ENCODE measurements at regions of chr6 and their contacts with region 1.

Region 1: DNA sequence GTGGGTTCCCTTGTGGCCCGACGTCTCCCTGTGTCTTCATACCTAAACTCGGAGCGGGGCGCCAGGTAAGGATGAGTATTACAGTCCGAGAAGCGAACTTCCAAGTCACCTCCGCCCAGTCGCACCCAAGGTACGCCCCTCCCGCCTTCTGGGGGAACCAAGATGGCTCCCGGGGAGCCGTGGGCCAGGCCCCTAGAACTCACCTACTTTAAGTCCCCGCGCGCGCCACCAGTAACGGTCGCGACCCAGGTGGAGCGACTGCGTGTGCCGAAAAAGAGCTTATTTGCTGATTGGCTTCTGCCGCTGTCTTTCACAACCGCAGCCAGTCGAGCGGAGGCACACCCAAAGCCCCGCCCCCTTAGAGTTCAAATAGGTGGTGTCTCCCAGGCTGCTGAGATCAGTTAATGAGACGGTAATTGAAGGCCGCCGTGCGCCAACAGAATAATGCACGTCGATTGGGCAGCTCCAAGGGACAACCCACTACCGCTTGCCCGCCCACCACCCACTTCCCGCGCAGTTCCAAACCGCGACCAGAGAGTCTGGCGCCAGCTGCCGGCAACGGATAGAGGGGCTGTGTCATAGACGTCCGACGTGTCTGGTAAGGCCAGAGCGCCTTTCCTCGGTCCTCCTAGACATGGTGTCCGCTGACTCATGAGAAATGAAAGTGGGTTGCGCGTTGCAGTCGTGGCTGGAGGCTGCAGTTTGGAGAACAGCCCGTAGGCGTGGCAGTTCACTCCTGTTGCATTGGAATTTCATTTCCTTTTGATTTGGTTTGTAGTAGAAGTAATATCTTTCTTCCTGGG is at the start of gene MDC1:
- DNase-seq: peak; percentile 100
- ATAC-seq: peak; percentile 79 to 88 (median 81)
- H3K4me3 ChIP-seq: peak within 1 kb of the TSS; percentile 66
- H3K27ac ChIP-seq: peak within 1 kb of the TSS; percentile 98
- H3K4me1 ChIP-seq: peaks cover 26% of the 10 kb centered on the region
- H3K27me3 ChIP-seq: no peaks in the 10 kb centered on the region
- CTCF ChIP-seq: peak; percentile 41
- total RNA-seq, gene MDC1: 12.7 to 18.0 (median 15.4) TPM

Region 2: GRCh38 chr6:30364591-30364990 is 352.7 kb before region 1 on chr6:
- intact Hi-C with region 1: no loop called
- DNase-seq: no peak
- ATAC-seq: no peak
- H3K4me3 ChIP-seq: no peak overlapping the region
- H3K27ac ChIP-seq: no peak overlapping the region
- H3K4me1 ChIP-seq: no peaks in the 10 kb centered on the region
- H3K27me3 ChIP-seq: peaks cover 0 to 43% (median 11%) of the 10 kb centered on the region in 3 donors
- CTCF ChIP-seq: no peak

Region 3: DNA sequence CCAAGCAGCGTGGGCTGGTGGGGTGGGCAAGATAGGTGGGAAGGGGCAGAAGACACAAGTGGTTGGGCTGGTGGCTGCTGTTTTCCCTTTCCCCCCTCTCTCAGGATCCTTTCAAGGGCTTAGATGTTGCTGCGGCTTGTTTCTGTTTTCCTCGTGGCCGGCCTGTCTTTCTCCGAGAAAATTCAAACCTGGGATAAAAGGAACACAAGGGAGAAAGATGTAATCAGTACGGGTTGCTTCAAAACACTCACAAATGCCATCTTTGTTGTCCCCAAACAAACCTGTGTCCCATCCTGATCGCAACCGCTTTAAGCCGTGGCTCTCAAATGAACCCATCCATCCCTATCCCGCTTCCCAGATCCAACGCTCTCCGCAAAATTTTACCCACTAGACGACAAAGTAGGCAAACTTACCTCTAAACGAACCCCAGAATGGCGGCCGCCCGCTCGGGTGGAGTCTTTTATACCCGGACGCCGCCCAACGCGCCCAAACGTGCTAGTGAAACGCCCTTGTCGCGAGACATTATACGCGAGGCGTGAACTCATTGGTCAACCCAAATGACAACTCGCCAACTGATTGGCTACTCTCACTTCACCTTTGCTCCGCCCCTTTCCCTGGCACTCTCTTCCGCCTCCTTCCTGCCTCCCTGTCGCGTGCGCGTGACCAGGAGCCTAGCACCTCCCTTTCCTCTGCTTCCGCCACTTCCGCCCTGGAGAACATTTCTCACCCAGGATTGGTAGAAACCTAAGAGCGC is 100.3 kb before region 1 on chr6 and contains the start of gene PPP1R10:
- intact Hi-C with region 1: loop called in 1 of 2 experiments (anchors 2 kb)
- DNase-seq: peak; percentile 98 to 99
- ATAC-seq: peak; percentile 83 to 88 (median 86)
- H3K4me3 ChIP-seq: peak within 1 kb of the TSS; percentile 84
- H3K27ac ChIP-seq: peak within 1 kb of the TSS; percentile 99
- H3K4me1 ChIP-seq: peaks cover 35% of the 10 kb centered on the region
- H3K27me3 ChIP-seq: no peaks in the 10 kb centered on the region
- CTCF ChIP-seq: no peak
- total RNA-seq, gene PPP1R10: 27.1 to 42.5 (median 31.6) TPM

Region 4: GRCh38 chr6:30626484-30627366 is 90.5 kb before region 1 on chr6 and contains the start of gene ATAT1:
- intact Hi-C with region 1: loop called in 1 of 2 experiments (anchors 5 kb)
- DNase-seq: peak; percentile 89 to 94
- ATAC-seq: peak; percentile 94 to 96 (median 94)
- H3K4me3 ChIP-seq: peak within 1 kb of the TSS; percentile 68
- H3K27ac ChIP-seq: peak within 1 kb of the TSS; percentile 85
- H3K4me1 ChIP-seq: peaks cover 7% of the 10 kb centered on the region
- H3K27me3 ChIP-seq: no peaks in the 10 kb centered on the region
- CTCF ChIP-seq: peak; percentile 24
- total RNA-seq, gene ATAT1: 2.1 to 5.2 (median 2.9) TPM

Region 5: GRCh38 chr6:30678964-30679726 is 38.1 kb before region 1 on chr6:
- intact Hi-C with region 1: loop called (anchors 1 kb)
- DNase-seq: peak; percentile 88 to 93
- ATAC-seq: peak; percentile 83 to 94 (median 90)
- H3K4me3 ChIP-seq: peak overlapping the region; percentile 85
- H3K27ac ChIP-seq: no peak overlapping the region
- H3K4me1 ChIP-seq: peaks cover 9% of the 10 kb centered on the region
- H3K27me3 ChIP-seq: no peaks in the 10 kb centered on the region
- CTCF ChIP-seq: peak; percentile 95

Region 6: DNA sequence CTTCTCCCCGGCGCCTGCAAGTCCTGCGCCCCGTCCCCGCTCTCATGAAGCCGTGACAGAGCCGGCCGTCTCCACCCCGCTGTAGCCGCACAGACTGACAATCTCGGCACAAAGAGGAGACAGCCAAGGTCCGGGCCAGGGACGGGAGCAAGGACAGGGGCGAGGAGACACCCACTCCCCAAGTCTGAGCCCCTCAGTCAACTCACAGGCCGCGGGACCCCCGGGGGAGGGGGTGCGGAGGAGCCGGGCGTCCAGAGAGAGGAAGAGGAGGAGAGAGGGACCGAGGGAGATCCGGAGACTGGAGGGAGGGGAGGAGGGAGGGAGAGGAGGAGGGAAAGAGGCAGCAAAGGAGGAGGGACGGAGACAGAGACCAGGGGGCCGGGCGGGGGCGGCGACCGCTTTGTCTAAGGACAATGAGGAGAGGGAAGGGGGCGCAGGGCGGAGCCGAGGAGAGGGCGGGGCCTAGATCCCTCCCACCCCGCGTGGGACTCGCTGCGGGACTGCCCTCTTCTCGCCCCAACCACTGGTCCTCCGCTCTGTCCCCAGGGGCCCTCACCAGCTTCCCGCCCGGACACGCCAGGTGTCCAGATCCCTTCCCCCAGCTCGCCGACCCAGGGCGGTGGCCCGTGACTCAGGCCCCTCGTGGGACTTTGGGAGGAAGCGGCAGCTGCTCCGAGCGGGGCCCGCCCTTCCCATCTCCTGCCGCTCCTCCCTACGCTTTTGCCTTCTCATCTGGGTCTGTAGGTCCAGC is 30.2 kb before region 1 on chr6:
- intact Hi-C with region 1: loop called in 1 of 2 experiments (anchors 2 kb)
- DNase-seq: peak; percentile 97 to 99
- ATAC-seq: peak; percentile 77 to 82 (median 80)
- H3K4me3 ChIP-seq: peak overlapping the region; percentile 85
- H3K27ac ChIP-seq: peak overlapping the region; percentile 91
- H3K4me1 ChIP-seq: peaks cover 35% of the 10 kb centered on the region
- H3K27me3 ChIP-seq: no peaks in the 10 kb centered on the region
- CTCF ChIP-seq: no peak

Region 7: GRCh38 chr6:31403283-31403989 is 686.2 kb after region 1 on chr6 and contains the start of gene MICA:
- intact Hi-C with region 1: no loop called
- DNase-seq: peak; percentile 90 to 92
- ATAC-seq: peak; percentile 82 to 85 (median 84)
- H3K4me3 ChIP-seq: peak within 1 kb of the TSS; percentile 75
- H3K27ac ChIP-seq: peak within 1 kb of the TSS; percentile 85
- H3K4me1 ChIP-seq: peaks cover 28% of the 10 kb centered on the region
- H3K27me3 ChIP-seq: no peaks in the 10 kb centered on the region
- CTCF ChIP-seq: no peak
- total RNA-seq, gene MICA: 2.7 to 5.7 (median 4.2) TPM

Measured in psoas muscle (tissue), 8 donors.